Common myeloid progenitor, CD34-positive (primary cell): ENCODE measurements at regions of chr6 and their contacts with region 1.

Region 1: DNA sequence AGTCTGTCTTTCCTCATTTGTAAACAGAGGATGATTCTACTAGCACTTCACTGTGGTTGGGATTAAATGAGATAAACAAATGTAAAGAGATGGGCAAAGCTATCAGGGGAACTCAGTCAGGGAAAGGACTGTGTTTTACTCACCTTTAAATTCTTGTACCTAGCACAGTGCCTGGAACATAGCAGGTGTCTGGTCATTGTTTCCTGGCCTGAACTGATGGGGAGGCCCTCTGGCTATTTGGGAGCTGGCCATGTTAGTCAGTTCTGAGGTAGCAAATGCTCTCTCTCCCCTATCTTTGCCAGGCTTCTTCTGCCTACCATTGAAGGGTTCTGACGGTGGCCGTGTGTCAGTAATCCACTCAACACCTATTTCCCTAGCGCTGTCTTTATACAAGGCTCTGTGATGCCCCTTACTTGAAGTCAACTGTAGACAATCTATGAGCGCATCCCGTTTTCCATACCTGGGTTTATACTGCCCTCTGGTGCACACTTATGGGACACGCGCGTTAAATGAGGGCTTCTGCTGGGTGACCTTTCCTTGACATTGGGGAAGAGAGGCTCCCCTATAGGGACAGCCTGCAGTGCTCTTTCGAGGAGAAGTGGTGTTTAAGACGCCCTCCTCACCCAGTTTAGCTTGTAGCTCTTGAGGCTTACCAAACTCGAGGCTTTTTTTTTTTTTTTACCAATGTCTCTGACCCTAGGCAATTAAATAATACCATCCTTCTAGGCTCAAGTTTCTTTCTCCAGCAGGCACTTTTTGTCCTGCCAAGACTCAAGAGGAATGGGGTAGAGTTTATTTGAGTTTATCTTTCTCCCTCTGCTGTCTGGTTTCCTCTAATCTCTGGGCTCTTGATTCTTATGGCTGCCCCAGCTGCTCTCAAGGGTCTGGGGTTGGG is 4.0 kb upstream of the SPATS1 start:
- DNase-seq: peak; percentile 66 to 81 (median 74)
- H3K4me3 ChIP-seq: no peak overlapping the region
- H3K27ac ChIP-seq: no peak overlapping the region
- H3K4me1 ChIP-seq: peaks cover 0 to 16% (median 11%) of the 10 kb centered on the region in 4 experiments
- H3K27me3 ChIP-seq: peaks cover 0 to 16% (median 13%) of the 10 kb centered on the region in 5 experiments

Region 2: GRCh38 chr6:44304282-44305199 is 33.9 kb before region 1 on chr6:
- CTCF ChIA-PET with region 1: interaction called, 10 read pairs
- POLR2A ChIA-PET with region 1: no interaction called
- DNase-seq: peak; percentile 45 to 59 (median 58)
- H3K4me3 ChIP-seq: no peak overlapping the region
- H3K27ac ChIP-seq: no peak overlapping the region
- H3K4me1 ChIP-seq: no peaks in the 10 kb centered on the region
- H3K27me3 ChIP-seq: no peaks in the 10 kb centered on the region

Region 3: GRCh38 chr6:44327096-44327495 is 11.4 kb before region 1 on chr6:
- CTCF ChIA-PET with region 1: interaction called, 12 read pairs
- POLR2A ChIA-PET with region 1: no interaction called
- DNase-seq: no peak
- H3K4me3 ChIP-seq: no peak overlapping the region
- H3K27ac ChIP-seq: no peak overlapping the region
- H3K4me1 ChIP-seq: no peaks in the 10 kb centered on the region
- H3K27me3 ChIP-seq: peaks cover 1 to 27% (median 9%) of the 10 kb centered on the region in 5 experiments